ENCODE measurements at regions of chr6 and their contacts with region 1.

Region 1: GRCh38 chr6:29847871-29848630 is 20.4 kb downstream of the HLA-G start:
- DNase-seq: peak; percentile 71 to 87 (median 80)
- ATAC-seq: peak; percentile 90
- H3K4me3 ChIP-seq: no peak overlapping the region
- H3K4me3 Mint-ChIP-seq: peak overlapping the region in 5 of 10 donors; percentile 5 to 49 (median 16)
- H3K27ac ChIP-seq: no peak overlapping the region
- H3K27ac Mint-ChIP-seq: peak overlapping the region in 1 of 9 donors; percentile 14
- H3K4me1 ChIP-seq: no peaks in the 10 kb centered on the region
- H3K4me1 Mint-ChIP-seq: peaks cover 0 to 24% (median 13%) of the 10 kb centered on the region in 7 donors
- H3K27me3 ChIP-seq: peaks cover 9 to 13% of the 10 kb centered on the region in 2 donors
- H3K27me3 Mint-ChIP-seq: peaks cover 54 to 73% (median 67%) of the 10 kb centered on the region in 5 donors

Region 2: GRCh38 chr6:29872791-29873190 is 24.7 kb after region 1 on chr6:
- CTCF ChIA-PET with region 1: no interaction called
- POLR2A ChIA-PET with region 1: no interaction called
- intact Hi-C with region 1: no loop called
- DNase-seq: no peak
- ATAC-seq: no peak
- H3K4me3 ChIP-seq: no peak overlapping the region
- H3K4me3 Mint-ChIP-seq: no peak overlapping the region
- H3K27ac ChIP-seq: no peak overlapping the region
- H3K27ac Mint-ChIP-seq: no peak overlapping the region
- H3K4me1 ChIP-seq: no peaks in the 10 kb centered on the region
- H3K4me1 Mint-ChIP-seq: peaks cover 0 to 2% (median 0%) of the 10 kb centered on the region in 7 donors
- H3K27me3 ChIP-seq: no peaks in the 10 kb centered on the region
- H3K27me3 Mint-ChIP-seq: peaks cover 6 to 16% (median 10%) of the 10 kb centered on the region in 5 donors

Region 3: GRCh38 chr6:29917857-29918256 is 69.8 kb after region 1 on chr6:
- CTCF ChIA-PET with region 1: interaction called, 3 read pairs
- POLR2A ChIA-PET with region 1: no interaction called
- intact Hi-C with region 1: loop called in 1 of 2 experiments (anchors 2 kb)
- DNase-seq: no peak
- ATAC-seq: no peak
- H3K4me3 ChIP-seq: no peak overlapping the region
- H3K4me3 Mint-ChIP-seq: no peak overlapping the region
- H3K27ac ChIP-seq: no peak overlapping the region
- H3K27ac Mint-ChIP-seq: no peak overlapping the region
- H3K4me1 ChIP-seq: no peaks in the 10 kb centered on the region
- H3K4me1 Mint-ChIP-seq: peaks cover 0 to 15% (median 0%) of the 10 kb centered on the region in 7 donors
- H3K27me3 ChIP-seq: no peaks in the 10 kb centered on the region
- H3K27me3 Mint-ChIP-seq: peaks cover 0 to 35% (median 0%) of the 10 kb centered on the region in 5 donors

Region 4: DNA sequence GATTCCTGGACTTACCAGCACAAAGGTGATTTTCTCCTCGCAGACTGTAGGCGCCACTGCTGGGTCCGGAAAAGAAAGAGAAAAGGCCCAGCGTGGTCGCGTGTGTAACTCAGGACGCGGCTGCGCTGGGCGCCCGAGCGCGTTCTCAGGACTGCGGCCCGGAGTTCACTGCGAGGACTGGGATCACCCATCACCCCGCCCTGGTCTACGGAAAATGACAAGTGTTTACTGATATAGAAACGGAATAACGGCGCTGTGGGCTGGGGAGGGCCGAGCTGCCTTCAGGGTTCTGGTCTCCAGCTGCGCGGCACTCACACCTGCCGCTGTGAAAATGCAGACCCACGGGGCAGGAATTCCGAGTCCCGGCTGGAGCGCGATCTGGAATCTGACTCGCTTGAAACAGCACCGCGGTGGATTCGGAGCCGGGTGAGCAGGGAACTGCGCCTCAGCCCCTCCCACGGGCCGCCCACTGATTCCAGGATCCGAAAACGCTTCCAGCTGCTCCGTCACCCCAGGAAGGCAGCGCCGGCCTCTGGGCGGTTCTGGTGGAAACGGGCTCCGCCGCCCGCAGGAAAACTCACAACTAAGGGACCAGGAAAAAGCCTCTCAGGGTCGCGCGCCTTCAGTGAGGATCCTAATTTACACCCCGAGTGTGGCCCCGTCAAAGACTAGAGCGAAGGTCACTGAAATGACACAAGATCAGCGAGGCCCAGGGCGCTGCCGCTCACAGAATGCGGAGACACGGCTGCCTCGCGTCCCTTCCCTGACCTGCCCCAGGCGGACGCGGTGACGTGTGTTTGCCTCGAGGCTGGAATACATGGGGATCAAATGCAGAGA is 128.8 kb after region 1 on chr6:
- CTCF ChIA-PET with region 1: interaction called, 4 read pairs
- POLR2A ChIA-PET with region 1: no interaction called
- intact Hi-C with region 1: loop called in 1 of 2 experiments (anchors 1 kb)
- DNase-seq: peak in 8 of 9 donors; percentile 27 to 60 (median 42)
- ATAC-seq: peak; percentile 87
- H3K4me3 ChIP-seq: peak overlapping the region; percentile 60
- H3K4me3 Mint-ChIP-seq: peak overlapping the region; percentile 87 to 96 (median 92)
- H3K27ac ChIP-seq: no peak overlapping the region
- H3K27ac Mint-ChIP-seq: peak overlapping the region in 4 of 9 donors; percentile 0 to 51 (median 26)
- H3K4me1 ChIP-seq: peaks cover 15 to 21% of the 10 kb centered on the region in 2 donors
- H3K4me1 Mint-ChIP-seq: peaks cover 38 to 46% (median 42%) of the 10 kb centered on the region in 7 donors
- H3K27me3 ChIP-seq: peaks cover 6 to 12% of the 10 kb centered on the region in 2 donors
- H3K27me3 Mint-ChIP-seq: peaks cover 36 to 74% (median 53%) of the 10 kb centered on the region in 5 donors

Region 5: DNA sequence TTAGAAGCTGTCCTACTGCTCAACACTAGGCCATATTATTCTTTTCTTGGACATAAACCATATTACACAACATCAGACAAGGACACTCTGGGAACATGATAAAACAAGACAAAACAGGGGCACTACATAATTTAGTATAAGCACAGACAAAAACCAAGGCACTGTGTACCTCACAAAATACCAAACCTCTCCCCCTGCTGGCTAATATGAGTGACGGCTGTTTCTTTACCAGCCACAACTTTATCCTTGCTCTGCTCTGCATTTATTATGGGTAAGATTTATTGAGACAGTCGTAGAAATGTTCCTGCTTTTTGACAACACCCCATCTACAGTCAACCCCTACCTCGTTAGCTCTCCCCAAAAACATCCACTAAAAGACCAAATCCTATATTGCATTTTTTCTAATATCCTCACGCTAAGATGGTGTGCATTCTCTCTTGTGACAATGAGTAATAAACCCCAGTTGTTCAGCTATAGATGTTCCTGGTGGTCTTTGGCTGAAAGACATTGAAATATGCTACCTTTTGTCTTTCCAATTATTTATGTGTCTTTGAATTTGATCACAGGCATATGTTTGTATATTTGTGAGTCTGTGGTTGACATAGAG is 189.2 kb after region 1 on chr6:
- CTCF ChIA-PET with region 1: interaction called, 3 read pairs
- POLR2A ChIA-PET with region 1: no interaction called
- intact Hi-C with region 1: loop called in 1 of 2 experiments (anchors 1 kb)
- DNase-seq: peak in 2 of 9 donors; percentile 10 to 15
- ATAC-seq: peak; percentile 47
- H3K4me3 ChIP-seq: no peak overlapping the region
- H3K4me3 Mint-ChIP-seq: no peak overlapping the region
- H3K27ac ChIP-seq: no peak overlapping the region
- H3K27ac Mint-ChIP-seq: no peak overlapping the region
- H3K4me1 ChIP-seq: no peaks in the 10 kb centered on the region
- H3K4me1 Mint-ChIP-seq: peaks cover 0 to 17% (median 3%) of the 10 kb centered on the region in 7 donors
- H3K27me3 ChIP-seq: no peaks in the 10 kb centered on the region
- H3K27me3 Mint-ChIP-seq: no peaks in the 10 kb centered on the region

Region 6: DNA sequence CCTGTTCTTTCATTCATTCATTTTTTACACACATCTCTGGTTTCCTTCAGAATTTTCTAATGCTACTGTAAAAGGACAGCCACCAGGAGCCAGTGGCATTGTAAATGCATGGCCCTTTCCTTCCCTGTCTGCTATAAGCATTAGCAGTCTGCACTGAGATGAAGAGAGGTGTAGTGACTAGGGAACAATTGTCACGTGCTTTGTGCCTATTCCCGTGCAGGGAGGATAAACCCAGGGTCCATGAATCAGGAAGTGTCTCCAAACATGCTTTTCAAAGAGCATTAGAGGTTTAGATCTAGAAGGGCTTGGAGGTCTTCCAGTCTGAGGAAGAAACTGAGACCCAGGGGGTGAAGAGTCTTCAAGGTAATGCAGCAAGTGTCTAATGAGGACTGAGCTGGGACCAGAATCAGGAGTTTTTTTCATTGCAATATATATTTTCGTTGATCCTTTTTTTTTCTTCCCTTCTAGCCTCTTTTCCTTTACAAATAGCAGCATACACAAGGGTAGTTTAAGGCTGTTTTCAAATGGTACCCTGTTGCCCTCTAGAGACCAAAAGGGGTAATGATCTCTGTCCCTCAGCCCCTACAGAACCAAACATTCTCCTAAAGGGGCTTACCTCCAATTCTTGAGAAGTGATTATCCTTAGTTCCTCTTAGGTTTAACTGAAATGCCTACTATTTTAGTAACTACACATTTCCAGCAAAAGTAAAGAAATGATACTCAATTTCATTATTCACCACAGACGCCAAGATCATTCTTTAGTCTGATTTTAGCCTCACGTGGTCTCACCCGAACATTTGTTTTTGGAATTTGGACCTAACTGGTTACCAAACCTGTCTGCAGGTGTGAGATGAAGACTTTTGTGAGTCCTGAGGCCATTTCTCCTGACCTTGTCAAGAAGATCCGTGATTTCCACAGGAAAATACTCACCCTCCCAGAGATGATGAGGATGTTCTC is 321.9 kb after region 1 on chr6:
- CTCF ChIA-PET with region 1: no interaction called
- POLR2A ChIA-PET with region 1: no interaction called
- intact Hi-C with region 1: loop called (anchors 2 kb)
- DNase-seq: peak in 5 of 9 donors; percentile 23 to 44 (median 34)
- ATAC-seq: peak; percentile 81
- H3K4me3 ChIP-seq: no peak overlapping the region
- H3K4me3 Mint-ChIP-seq: no peak overlapping the region
- H3K27ac ChIP-seq: no peak overlapping the region
- H3K27ac Mint-ChIP-seq: no peak overlapping the region
- H3K4me1 ChIP-seq: peaks cover 0 to 3% of the 10 kb centered on the region in 2 donors
- H3K4me1 Mint-ChIP-seq: peaks cover 0 to 37% (median 4%) of the 10 kb centered on the region in 7 donors
- H3K27me3 ChIP-seq: peaks cover 9 to 12% of the 10 kb centered on the region in 2 donors
- H3K27me3 Mint-ChIP-seq: peaks cover 42 to 65% (median 57%) of the 10 kb centered on the region in 5 donors

Measured in naive thymus-derived CD4-positive, alpha-beta T cell (primary cell).